Ovary (tissue), 10 donors: ENCODE measurements at regions of chr1 and their contacts with region 1.

Region 1: GRCh38 chr1:245322673-245323441 is 168.1 kb downstream of the KIF26B start:
- DNase-seq: no peak
- H3K4me3 ChIP-seq: no peak overlapping the region
- H3K27ac ChIP-seq: no peak overlapping the region
- H3K4me1 ChIP-seq: no peaks in the 10 kb centered on the region
- H3K27me3 ChIP-seq: no peaks in the 10 kb centered on the region
- CTCF ChIP-seq: no peak
- EP300 ChIP-seq: no peak
- POLR2A ChIP-seq: no peak

Region 2: GRCh38 chr1:245258271-245258920 is 64.5 kb before region 1 on chr1:
- intact Hi-C with region 1: no loop called
- DNase-seq: no peak
- H3K4me3 ChIP-seq: no peak overlapping the region
- H3K27ac ChIP-seq: no peak overlapping the region
- H3K4me1 ChIP-seq: no peaks in the 10 kb centered on the region
- H3K27me3 ChIP-seq: no peaks in the 10 kb centered on the region
- CTCF ChIP-seq: no peak
- EP300 ChIP-seq: no peak
- POLR2A ChIP-seq: no peak

Region 3: GRCh38 chr1:245549996-245550719 is 227.3 kb after region 1 on chr1:
- intact Hi-C with region 1: no loop called
- DNase-seq: no peak
- H3K4me3 ChIP-seq: no peak overlapping the region
- H3K27ac ChIP-seq: no peak overlapping the region
- H3K4me1 ChIP-seq: no peaks in the 10 kb centered on the region
- H3K27me3 ChIP-seq: no peaks in the 10 kb centered on the region
- CTCF ChIP-seq: no peak
- EP300 ChIP-seq: no peak
- POLR2A ChIP-seq: no peak

Region 4: GRCh38 chr1:245690156-245690690 is 367.4 kb after region 1 on chr1:
- intact Hi-C with region 1: loop called in 1 of 4 experiments (anchors 5 kb)
- DNase-seq: no peak
- H3K4me3 ChIP-seq: no peak overlapping the region
- H3K27ac ChIP-seq: no peak overlapping the region
- H3K4me1 ChIP-seq: no peaks in the 10 kb centered on the region
- H3K27me3 ChIP-seq: no peaks in the 10 kb centered on the region
- CTCF ChIP-seq: no peak
- EP300 ChIP-seq: no peak
- POLR2A ChIP-seq: no peak